Aorta (tissue), 5 donors: ENCODE measurements at regions of chr19 and their contacts with region 1.

Region 1: GRCh38 chr19:17570791-17571190 is 15.3 kb downstream of the COLGALT1 start:
- DNase-seq: no peak
- ATAC-seq: no peak
- H3K4me3 ChIP-seq: no peak overlapping the region
- H3K27ac ChIP-seq: no peak overlapping the region
- H3K4me1 ChIP-seq: no peaks in the 10 kb centered on the region
- H3K27me3 ChIP-seq: no peaks in the 10 kb centered on the region

Region 2: GRCh38 chr19:17450264-17451075 is 120.3 kb before region 1 on chr19:
- intact Hi-C with region 1: loop called in 1 of 2 experiments (anchors 5 kb)
- DNase-seq: no peak
- ATAC-seq: no peak
- H3K4me3 ChIP-seq: no peak overlapping the region
- H3K27ac ChIP-seq: no peak overlapping the region
- H3K4me1 ChIP-seq: no peaks in the 10 kb centered on the region
- H3K27me3 ChIP-seq: no peaks in the 10 kb centered on the region

Region 3: GRCh38 chr19:17530586-17530985 is 40.2 kb before region 1 on chr19:
- intact Hi-C with region 1: no loop called
- DNase-seq: no peak
- ATAC-seq: no peak
- H3K4me3 ChIP-seq: no peak overlapping the region
- H3K27ac ChIP-seq: no peak overlapping the region
- H3K4me1 ChIP-seq: no peaks in the 10 kb centered on the region
- H3K27me3 ChIP-seq: no peaks in the 10 kb centered on the region